GM10248 (cell line): ENCODE measurements at regions of chr5 and their contacts with region 1.

Region 1: GRCh38 chr5:73792687-73793320 is 166.8 kb downstream of the ARHGEF28 start:
- DNase-seq: peak; percentile 56
- CTCF ChIP-seq: peak; percentile 93

Region 2: GRCh38 chr5:73596705-73597328 is 196.0 kb before region 1 on chr5:
- CTCF ChIA-PET with region 1: interaction called, 341 read pairs
- POLR2A ChIA-PET with region 1: no interaction called
- DNase-seq: no peak
- CTCF ChIP-seq: peak; percentile 41

Region 3: GRCh38 chr5:73740274-73740790 is 52.5 kb before region 1 on chr5:
- CTCF ChIA-PET with region 1: no interaction called
- POLR2A ChIA-PET with region 1: no interaction called
- DNase-seq: no peak
- CTCF ChIP-seq: no peak

Region 4: GRCh38 chr5:73774924-73775323 is 17.9 kb before region 1 on chr5:
- CTCF ChIA-PET with region 1: interaction called, 10 read pairs
- POLR2A ChIA-PET with region 1: no interaction called
- DNase-seq: no peak
- CTCF ChIP-seq: no peak

Region 5: GRCh38 chr5:73815631-73816030 is 22.8 kb after region 1 on chr5:
- CTCF ChIA-PET with region 1: interaction called, 10 read pairs
- POLR2A ChIA-PET with region 1: no interaction called
- DNase-seq: no peak
- CTCF ChIP-seq: no peak

Region 6: DNA sequence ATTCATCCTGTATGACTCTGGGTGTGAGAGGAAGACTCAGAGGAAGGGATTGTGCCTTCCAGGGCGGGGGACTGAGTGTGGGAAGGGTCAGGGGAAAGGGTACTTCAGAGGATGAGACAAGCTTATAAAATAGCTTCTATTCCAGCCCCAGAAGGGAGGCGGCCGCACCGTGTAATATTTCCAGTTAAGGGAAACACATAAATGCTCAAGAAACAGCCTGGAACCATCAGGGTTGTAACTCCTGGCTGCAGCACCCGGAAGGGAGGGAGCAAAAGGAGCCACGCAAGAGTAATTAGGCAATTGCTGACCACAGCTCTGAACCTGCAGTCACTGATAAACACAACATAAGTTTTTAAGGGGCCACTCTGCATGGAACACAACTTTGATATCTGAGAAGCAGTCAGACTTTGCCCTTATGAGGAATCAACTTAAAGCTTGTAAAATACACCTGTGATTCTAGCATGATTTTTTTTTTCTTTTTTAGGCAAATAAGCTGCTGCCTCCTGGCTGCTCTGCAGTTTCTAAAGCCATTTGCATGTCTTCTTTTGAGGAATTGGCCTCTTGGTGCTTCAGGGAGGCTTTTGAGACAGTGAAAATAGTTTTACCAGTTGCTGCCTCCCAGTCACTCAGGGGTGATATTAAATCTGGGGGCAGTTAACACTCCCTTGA is 465.0 kb after region 1 on chr5:
- CTCF ChIA-PET with region 1: no interaction called
- POLR2A ChIA-PET with region 1: no interaction called
- DNase-seq: no peak
- CTCF ChIP-seq: no peak